Caco-2 (cell line): ENCODE measurements at regions of chrX and their contacts with region 1.

Region 1: DNA sequence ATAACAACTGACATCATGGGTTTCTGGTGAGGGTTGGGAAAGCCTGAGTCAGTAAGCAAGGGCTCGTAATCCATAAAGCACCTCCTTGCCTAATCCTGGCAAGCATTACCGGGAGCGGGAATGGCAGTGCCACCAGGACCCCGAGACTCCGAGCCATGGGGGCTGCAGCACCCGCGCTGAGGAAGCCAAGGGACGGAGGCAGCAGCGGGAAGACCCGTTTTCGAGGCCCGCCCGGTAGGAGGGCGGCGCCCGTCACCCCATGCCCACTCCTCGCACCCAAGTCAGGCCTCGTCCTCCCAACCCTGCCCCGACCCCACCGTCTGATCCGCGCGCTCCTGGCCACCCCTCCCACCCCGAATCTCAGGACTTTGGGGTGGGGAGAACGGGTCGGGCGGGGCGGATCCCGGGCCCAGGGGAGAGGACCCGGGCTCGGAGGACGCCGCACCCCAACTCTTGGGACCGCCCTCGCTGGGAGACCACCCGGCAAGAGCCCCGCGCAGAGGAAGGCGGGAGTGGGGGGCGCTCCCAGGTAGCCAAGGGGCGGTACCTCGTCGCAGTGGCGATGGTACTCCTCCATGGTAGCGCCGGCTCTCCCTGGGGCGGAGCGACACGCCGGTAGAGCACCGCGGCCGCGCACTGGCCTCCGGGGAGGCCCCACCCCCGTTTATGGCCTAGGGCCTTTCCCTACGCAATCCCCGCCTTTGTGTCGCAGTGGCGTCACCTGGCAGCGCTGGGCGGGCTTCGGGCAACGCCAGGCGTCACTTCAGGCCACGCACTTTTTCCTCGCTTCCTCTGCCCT is at the start of gene DYNLT3:
- DNase-seq: peak; percentile 88 to 90
- H3K4me3 ChIP-seq: peak within 1 kb of the TSS; percentile 87
- H3K4me3 Mint-ChIP-seq: peak within 1 kb of the TSS; percentile 70
- H3K27ac Mint-ChIP-seq: peak within 1 kb of the TSS; percentile 63
- H3K4me1 ChIP-seq: peaks cover 6% of the 10 kb centered on the region; the same call in 1 of the 2 replicates
- H3K4me1 Mint-ChIP-seq: no peaks in the 10 kb centered on the region
- H3K27me3 ChIP-seq: no peaks in the 10 kb centered on the region
- H3K27me3 Mint-ChIP-seq: no peaks in the 10 kb centered on the region
- CTCF ChIP-seq: no peak
- total RNA-seq, gene DYNLT3: 26.9 and 27.5 TPM in 2 replicates

Region 2: DNA sequence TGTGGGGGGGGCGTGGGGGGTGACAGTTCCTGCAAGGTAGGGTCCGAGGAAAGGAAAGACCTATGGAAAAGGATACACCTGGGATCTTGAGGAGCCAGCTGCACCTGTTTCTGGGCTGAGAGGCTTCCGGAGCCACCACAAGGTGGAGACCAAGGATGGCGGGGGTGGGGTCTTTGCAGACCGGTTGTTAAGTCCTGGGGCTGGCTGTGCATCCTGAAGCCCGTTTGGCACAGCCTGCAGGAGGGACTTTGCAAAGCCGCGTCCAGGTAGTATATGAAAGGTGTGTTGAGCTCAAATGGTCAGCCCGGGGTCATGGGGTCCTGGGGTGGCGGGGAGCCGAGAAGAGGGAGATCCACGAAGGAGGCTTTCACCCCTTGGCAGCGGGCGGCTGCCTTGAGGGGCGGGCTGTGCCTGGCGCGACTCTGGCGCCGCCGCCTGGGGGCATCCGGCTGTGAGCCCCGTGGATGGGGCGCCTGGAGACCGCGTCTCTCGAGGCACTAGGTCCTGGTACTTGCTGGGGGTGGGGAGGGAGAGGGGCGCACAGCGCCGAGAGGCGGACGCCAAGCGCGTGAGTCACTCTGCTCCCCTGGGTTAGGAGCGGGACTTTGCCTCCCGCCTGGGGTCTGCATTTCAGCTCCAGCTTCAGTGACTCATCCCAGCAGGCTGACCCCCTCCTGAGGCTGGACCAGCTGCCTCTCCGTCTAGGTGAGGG is 58.5 kb after region 1 on chrX:
- CTCF ChIA-PET with region 1: no interaction called
- POLR2A ChIA-PET with region 1: no interaction called
- intact Hi-C with region 1: loop called (anchors 5 kb)
- DNase-seq: peak; percentile 70 to 79
- H3K4me3 ChIP-seq: peak overlapping the region; percentile 49
- H3K4me3 Mint-ChIP-seq: peak overlapping the region; percentile 82
- H3K27ac Mint-ChIP-seq: no peak overlapping the region
- H3K4me1 ChIP-seq: no peaks in the 10 kb centered on the region
- H3K4me1 Mint-ChIP-seq: no peaks in the 10 kb centered on the region
- H3K27me3 ChIP-seq: no peaks in the 10 kb centered on the region
- H3K27me3 Mint-ChIP-seq: no peaks in the 10 kb centered on the region
- CTCF ChIP-seq: peak; percentile 9 to 53